Activated T-helper 2 cell treated with anti-CD3 and anti-CD28 coated beads, Interferon-gamma antibody, Interleukin-2, Interleukin-4, amounts not matched to agents 10 μg/mL and 5 μg/mL and 100 μg/mL, durations not matched to agents 14 hours and 24 hours and 36 hours (primary cell): ENCODE measurements at regions of chr9 and their contacts with region 1.

Region 1: GRCh38 chr9:109012876-109013678 is at the start of gene CTNNAL1:
- DNase-seq: peak; percentile 79
- H3K4me3 Mint-ChIP-seq: peak within 1 kb of the TSS; percentile 92
- H3K27ac Mint-ChIP-seq: peak within 1 kb of the TSS; percentile 86
- H3K4me1 Mint-ChIP-seq: peaks cover 32% of the 10 kb centered on the region
- H3K27me3 Mint-ChIP-seq: peaks cover 8% of the 10 kb centered on the region
- total RNA-seq, gene CTNNAL1: 19.8 and 21.6 TPM in 2 replicates

Region 2: GRCh38 chr9:108859459-108860114 is 153.5 kb before region 1 on chr9:
- intact Hi-C with region 1: no loop called
- DNase-seq: no peak
- H3K4me3 Mint-ChIP-seq: no peak overlapping the region
- H3K27ac Mint-ChIP-seq: no peak overlapping the region
- H3K4me1 Mint-ChIP-seq: peaks cover 5% of the 10 kb centered on the region
- H3K27me3 Mint-ChIP-seq: no peaks in the 10 kb centered on the region

Region 3: DNA sequence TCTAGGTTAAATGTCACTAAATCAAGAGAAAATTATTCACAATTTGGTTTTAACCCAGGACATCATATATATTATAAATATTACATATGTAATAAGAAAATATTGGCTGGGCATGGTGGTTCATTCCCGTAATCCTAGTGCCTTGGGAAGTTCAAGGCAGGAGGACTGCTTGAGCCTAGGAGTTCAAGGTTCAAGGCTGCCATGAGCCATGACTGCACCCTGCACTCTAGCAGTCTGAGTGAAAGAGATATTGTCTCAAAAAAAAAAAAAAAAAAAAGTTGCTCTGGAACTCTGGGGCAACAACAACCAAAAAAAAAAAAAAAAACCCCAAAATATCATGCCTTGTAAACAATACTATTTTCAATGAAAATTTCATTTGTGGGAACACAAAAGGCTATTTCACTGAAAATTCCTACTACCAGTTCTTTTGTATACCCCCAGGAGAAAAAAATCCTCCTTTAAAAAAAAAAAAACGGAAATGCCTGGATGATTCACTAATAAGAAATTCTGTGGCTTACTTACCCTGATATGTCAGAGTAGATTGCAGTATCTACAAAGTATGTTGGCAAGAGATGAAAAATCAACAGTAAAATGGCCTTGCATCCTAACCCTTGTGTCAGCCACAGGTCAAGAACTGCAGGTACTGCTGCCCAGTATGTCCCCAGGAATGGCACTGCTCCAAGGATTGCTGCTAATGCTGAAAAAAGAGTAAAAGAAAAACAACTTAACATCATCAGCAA is 22.8 kb after region 1 on chr9:
- intact Hi-C with region 1: no loop called
- DNase-seq: no peak
- H3K4me3 Mint-ChIP-seq: no peak overlapping the region
- H3K27ac Mint-ChIP-seq: no peak overlapping the region
- H3K4me1 Mint-ChIP-seq: peaks cover 3% of the 10 kb centered on the region
- H3K27me3 Mint-ChIP-seq: no peaks in the 10 kb centered on the region

Region 4: GRCh38 chr9:109046346-109046745 is 33.3 kb after region 1 on chr9:
- intact Hi-C with region 1: loop called (anchors 1 kb)
- DNase-seq: no peak
- H3K4me3 Mint-ChIP-seq: no peak overlapping the region
- H3K27ac Mint-ChIP-seq: no peak overlapping the region
- H3K4me1 Mint-ChIP-seq: peaks cover 17% of the 10 kb centered on the region
- H3K27me3 Mint-ChIP-seq: no peaks in the 10 kb centered on the region

Region 5: DNA sequence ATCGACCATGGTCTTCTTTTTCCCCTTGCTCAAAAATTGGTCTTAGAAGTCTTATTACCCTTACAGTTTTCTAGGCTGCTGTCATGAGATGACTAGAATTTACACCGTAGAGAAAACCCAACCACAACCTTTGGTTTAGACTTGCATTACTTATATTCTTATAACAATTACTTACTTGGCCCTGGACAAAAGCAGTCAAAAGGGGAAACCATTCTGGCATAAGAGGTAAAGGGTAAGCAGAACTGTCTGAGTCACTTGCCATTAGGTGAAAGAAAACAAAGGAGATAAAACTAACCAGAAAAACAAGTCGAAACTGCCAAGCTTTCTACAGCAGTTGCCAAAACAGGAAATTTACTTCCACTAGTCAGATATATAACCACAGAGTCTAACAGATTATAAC is 88.7 kb after region 1 on chr9:
- intact Hi-C with region 1: loop called (anchors 2 kb)
- DNase-seq: no peak
- H3K4me3 Mint-ChIP-seq: peak overlapping the region; percentile 58
- H3K27ac Mint-ChIP-seq: peak overlapping the region; percentile 83
- H3K4me1 Mint-ChIP-seq: peaks cover 60% of the 10 kb centered on the region
- H3K27me3 Mint-ChIP-seq: no peaks in the 10 kb centered on the region

Region 6: DNA sequence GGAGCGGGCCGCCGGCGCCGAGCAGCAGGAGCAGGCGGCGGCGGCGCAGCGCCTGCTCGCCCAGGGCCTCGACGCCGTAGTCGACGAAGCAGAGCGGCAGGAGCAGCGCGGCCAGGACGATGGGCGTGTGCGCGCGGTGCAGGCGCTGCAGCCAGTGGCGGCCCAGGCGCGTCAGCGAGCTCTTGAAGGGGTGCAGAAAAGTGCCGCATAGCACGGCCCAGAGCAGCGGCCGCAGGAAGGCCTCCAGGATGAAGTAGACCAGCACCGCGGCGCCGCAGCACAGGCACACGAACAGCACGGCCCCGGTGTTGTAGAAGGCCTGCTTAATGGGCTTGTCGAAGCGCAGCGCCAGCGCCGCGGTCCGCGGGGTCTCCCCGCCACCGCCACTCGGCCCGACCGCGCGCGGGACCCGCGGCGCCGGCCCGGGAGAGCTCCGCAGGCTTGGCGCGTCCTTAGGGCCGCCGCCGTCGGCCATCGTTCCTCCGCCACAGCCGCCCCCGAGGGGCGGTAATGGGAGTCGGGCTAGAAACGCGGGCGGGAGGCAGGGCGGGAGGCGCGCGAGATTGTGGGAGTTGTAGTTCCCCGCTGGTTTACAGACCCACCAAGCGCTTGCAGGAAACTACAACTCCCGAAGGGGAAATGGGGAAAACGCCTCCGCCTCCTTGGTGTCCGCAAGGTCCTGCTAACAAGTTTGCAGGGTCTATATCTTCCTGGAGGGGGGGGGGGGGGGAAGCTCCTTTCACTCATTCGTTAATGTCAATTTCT is 106.5 kb after region 1 on chr9 and contains the start of gene TMEM245:
- intact Hi-C with region 1: loop called (anchors 1 kb)
- DNase-seq: peak; percentile 93
- H3K4me3 Mint-ChIP-seq: peak within 1 kb of the TSS; percentile 84
- H3K27ac Mint-ChIP-seq: peak within 1 kb of the TSS; percentile 83
- H3K4me1 Mint-ChIP-seq: peaks cover 36% of the 10 kb centered on the region
- H3K27me3 Mint-ChIP-seq: no peaks in the 10 kb centered on the region
- total RNA-seq, gene TMEM245: 24.0 and 25.8 TPM in 2 replicates

Region 7: DNA sequence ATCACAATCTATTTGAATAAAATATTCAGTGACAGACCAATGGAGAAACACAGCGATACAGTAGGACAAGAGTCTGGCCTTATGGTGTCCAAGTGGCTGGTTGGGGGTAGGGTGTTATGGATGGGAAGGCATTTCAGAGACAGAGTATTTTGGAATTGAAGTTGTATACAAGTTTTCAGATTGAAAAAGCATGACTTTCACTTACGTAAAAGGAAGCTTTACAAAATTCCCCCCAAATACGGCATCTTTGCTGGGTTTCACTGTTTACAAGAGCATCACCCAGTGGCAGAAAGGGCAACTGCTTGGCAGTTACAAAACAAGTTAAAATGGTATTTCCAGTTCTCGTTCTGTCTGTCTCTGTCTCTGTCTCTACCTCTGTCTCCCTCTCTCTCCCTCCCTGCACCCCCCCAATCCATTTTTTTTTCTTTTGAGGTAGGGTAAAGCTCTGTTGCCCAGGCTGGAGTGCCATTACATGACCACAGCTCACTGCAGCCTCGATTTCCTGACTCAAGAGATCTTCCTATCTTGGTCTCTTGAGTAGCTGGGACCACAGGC is 398.8 kb after region 1 on chr9:
- intact Hi-C with region 1: loop called (anchors 2 kb)
- DNase-seq: no peak
- H3K4me3 Mint-ChIP-seq: peak overlapping the region; percentile 82
- H3K27ac Mint-ChIP-seq: peak overlapping the region; percentile 97
- H3K4me1 Mint-ChIP-seq: peaks cover 68% of the 10 kb centered on the region
- H3K27me3 Mint-ChIP-seq: no peaks in the 10 kb centered on the region

Region 8: GRCh38 chr9:110256380-110257096 is 1243.5 kb after region 1 on chr9 and contains the start of gene TXN:
- intact Hi-C with region 1: loop called (anchors 5 kb)
- DNase-seq: peak; percentile 82
- H3K4me3 Mint-ChIP-seq: peak within 1 kb of the TSS; percentile 95
- H3K27ac Mint-ChIP-seq: peak within 1 kb of the TSS; percentile 99
- H3K4me1 Mint-ChIP-seq: peaks cover 49% of the 10 kb centered on the region
- H3K27me3 Mint-ChIP-seq: no peaks in the 10 kb centered on the region
- total RNA-seq, gene TXN: 539 and 551 TPM in 2 replicates